Activated T-helper 1 cell treated with anti-CD3 and anti-CD28 coated beads, Interleukin-12 subunit alpha, Interleukin-12 subunit beta, Interleukin-2, Interleukin-4 antibody, amounts not matched to agents 30 ng/mL and 10 ng/mL and 1 ng/mL, durations not matched to agents 14 hours and 24 hours and 36 hours (primary cell): ENCODE measurements at regions of chr1 and their contacts with region 1.

Region 1: DNA sequence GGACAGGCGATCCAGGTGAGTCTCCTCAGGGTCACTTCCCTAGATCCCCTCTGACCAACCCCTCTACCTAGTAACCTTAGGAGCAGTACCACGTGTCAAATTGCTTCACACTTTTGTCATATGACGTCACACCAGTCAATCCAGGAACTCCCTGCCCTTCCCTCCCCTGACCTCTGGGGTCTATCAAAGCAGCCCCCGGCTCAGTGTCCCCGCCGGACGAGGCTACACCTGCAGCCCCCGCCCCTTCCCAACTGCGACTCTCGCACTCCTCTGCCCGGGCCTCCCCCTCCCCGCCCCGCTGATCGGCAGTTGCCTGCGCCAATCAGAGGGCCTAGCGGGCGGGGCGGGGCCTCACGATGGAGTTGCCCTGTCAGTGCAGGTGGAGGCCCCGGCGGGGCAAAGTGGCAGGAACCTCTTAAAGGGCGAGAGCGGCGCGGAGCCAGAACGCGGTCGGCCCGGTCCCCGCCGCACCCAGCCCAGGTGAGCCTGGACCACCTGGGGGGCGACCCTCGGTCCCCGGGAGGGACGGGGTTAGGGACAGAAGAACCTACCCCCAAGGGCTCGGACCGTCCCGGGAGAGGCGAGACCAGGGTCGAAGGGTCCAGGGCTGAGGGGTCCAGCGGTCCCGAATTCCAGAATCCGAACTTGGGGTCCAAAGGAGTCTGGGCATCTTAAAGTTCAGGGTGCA is 27.5 kb upstream of the EPB41 start:
- DNase-seq: peak; percentile 91
- H3K4me3 Mint-ChIP-seq: peak overlapping the region; percentile 88
- H3K27ac Mint-ChIP-seq: peak overlapping the region; percentile 93
- H3K4me1 Mint-ChIP-seq: peaks cover 56% of the 10 kb centered on the region
- H3K27me3 Mint-ChIP-seq: no peaks in the 10 kb centered on the region

Region 2: GRCh38 chr1:28648474-28649198 is 238.2 kb before region 1 on chr1 and contains the start of gene RNU11:
- intact Hi-C with region 1: loop called (anchors 2 kb)
- DNase-seq: peak; percentile 86
- H3K4me3 Mint-ChIP-seq: peak within 1 kb of the TSS; percentile 92
- H3K27ac Mint-ChIP-seq: peak within 1 kb of the TSS; percentile 100
- H3K4me1 Mint-ChIP-seq: peaks cover 31% of the 10 kb centered on the region
- H3K27me3 Mint-ChIP-seq: peaks cover 2% of the 10 kb centered on the region
- total RNA-seq, gene RNU11: not detected in 2 replicates

Region 3: GRCh38 chr1:28914228-28915030 is 27.6 kb after region 1 on chr1 and contains the start of gene EPB41:
- intact Hi-C with region 1: loop called (anchors 1 kb)
- DNase-seq: peak; percentile 88
- H3K4me3 Mint-ChIP-seq: peak within 1 kb of the TSS; percentile 96
- H3K27ac Mint-ChIP-seq: peak within 1 kb of the TSS; percentile 92
- H3K4me1 Mint-ChIP-seq: peaks cover 51% of the 10 kb centered on the region
- H3K27me3 Mint-ChIP-seq: no peaks in the 10 kb centered on the region
- total RNA-seq, gene EPB41: 70.0 and 74.9 TPM in 2 replicates

Region 4: GRCh38 chr1:28983509-28984310 is 96.8 kb after region 1 on chr1:
- intact Hi-C with region 1: no loop called
- DNase-seq: no peak
- H3K4me3 Mint-ChIP-seq: no peak overlapping the region
- H3K27ac Mint-ChIP-seq: no peak overlapping the region
- H3K4me1 Mint-ChIP-seq: peaks cover 18% of the 10 kb centered on the region
- H3K27me3 Mint-ChIP-seq: no peaks in the 10 kb centered on the region

Region 5: DNA sequence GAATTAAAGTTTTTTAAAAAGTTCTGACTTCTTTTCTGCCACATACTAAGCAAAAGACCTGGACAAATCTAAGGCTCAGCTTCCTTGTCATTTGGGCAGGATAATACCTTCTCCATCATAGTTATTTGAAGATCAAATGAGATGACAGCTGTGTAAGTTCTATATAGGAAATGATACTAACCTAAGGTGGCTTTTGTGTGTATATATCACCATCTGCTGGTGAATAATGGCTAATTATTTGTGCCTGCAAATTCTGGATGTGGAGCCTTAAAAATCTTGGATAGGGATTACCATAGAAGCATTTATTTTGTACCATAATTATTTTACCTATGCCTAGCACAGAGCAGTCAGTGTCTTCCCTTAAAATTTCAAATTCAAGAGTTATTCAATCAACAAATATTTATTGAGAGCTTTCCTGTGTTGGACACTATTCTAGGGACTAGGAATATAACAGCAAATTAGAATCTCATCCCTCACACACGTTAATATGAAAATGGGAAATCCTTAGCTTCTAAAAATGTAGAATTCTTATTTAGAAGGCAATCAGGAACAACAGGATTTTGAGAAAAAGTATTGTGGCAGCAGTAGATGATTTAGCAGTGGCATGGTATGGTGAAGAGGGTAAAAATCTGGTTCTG is 147.1 kb after region 1 on chr1:
- intact Hi-C with region 1: loop called (anchors 1 kb)
- DNase-seq: no peak
- H3K4me3 Mint-ChIP-seq: no peak overlapping the region
- H3K27ac Mint-ChIP-seq: no peak overlapping the region
- H3K4me1 Mint-ChIP-seq: no peaks in the 10 kb centered on the region
- H3K27me3 Mint-ChIP-seq: no peaks in the 10 kb centered on the region

Region 6: GRCh38 chr1:29044010-29044409 is 157.1 kb after region 1 on chr1:
- intact Hi-C with region 1: no loop called
- DNase-seq: no peak
- H3K4me3 Mint-ChIP-seq: no peak overlapping the region
- H3K27ac Mint-ChIP-seq: no peak overlapping the region
- H3K4me1 Mint-ChIP-seq: peaks cover 8% of the 10 kb centered on the region
- H3K27me3 Mint-ChIP-seq: no peaks in the 10 kb centered on the region

Region 7: GRCh38 chr1:29181413-29182225 is 294.7 kb after region 1 on chr1 and contains the start of gene SRSF4:
- intact Hi-C with region 1: loop called (anchors 1 kb)
- DNase-seq: peak; percentile 99
- H3K4me3 Mint-ChIP-seq: peak within 1 kb of the TSS; percentile 97
- H3K27ac Mint-ChIP-seq: peak within 1 kb of the TSS; percentile 92
- H3K4me1 Mint-ChIP-seq: peaks cover 53% of the 10 kb centered on the region
- H3K27me3 Mint-ChIP-seq: no peaks in the 10 kb centered on the region
- total RNA-seq, gene SRSF4: 129 and 135 TPM in 2 replicates

Region 8: DNA sequence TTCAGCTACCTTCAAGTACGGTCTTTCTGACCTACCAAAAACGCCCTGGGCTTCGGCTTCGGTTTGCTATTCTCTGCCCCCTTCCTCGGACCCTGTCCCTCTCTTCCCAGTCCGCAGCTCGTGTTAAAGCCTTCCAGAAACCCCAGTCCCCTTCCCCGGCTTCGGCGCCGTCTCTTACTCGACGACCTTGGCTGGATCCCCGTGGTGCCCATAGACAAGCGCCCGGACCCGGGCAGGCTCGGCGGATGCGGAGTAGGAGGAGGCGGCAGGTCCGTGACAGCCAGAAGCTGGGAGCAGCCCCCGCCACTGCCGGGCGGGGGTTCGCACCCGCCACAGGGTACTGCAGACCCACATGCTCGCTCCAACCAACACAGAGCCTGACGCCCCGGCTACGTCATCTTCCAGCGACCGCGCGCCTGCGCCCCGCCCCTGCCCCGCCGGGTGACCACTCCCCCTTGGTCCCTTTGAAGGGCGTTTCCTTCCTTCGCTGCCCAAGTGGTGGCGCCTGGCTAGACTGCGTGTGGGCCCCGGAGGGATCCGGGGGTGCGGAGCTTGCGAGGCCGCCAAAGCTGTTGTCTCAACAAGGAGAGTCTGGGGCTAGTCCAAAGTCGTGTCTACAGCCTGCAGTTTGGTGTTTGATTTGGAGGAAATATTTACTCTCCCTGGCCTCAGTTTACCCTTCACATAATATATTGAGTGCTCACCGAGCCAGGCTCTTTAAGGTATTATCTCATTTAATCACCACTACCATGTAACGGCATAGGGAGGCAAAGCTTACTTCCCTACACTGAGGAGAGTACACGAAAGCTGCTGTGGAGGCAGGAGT is 343.9 kb after region 1 on chr1 and contains the start of gene MECR:
- intact Hi-C with region 1: loop called (anchors 1 kb)
- DNase-seq: peak; percentile 95
- H3K4me3 Mint-ChIP-seq: peak within 1 kb of the TSS; percentile 94
- H3K27ac Mint-ChIP-seq: peak within 1 kb of the TSS; percentile 84
- H3K4me1 Mint-ChIP-seq: peaks cover 23% of the 10 kb centered on the region
- H3K27me3 Mint-ChIP-seq: peaks cover 15% of the 10 kb centered on the region
- total RNA-seq, gene MECR: 34.5 and 36.4 TPM in 2 replicates